Naive thymus-derived CD4-positive, alpha-beta T cell (primary cell): ENCODE measurements at regions of chr11 and their contacts with region 1.

Region 1: GRCh38 chr11:57800444-57801182 is 39.0 kb downstream of the CTNND1 start:
- DNase-seq: peak in 7 of 9 donors; percentile 46 to 70 (median 64)
- ATAC-seq: peak; percentile 93
- H3K4me3 ChIP-seq: no peak overlapping the region
- H3K4me3 Mint-ChIP-seq: peak overlapping the region in 6 of 10 donors; percentile 33 to 57 (median 54)
- H3K27ac ChIP-seq: peak overlapping the region; percentile 39
- H3K27ac Mint-ChIP-seq: peak overlapping the region; percentile 42 to 92 (median 80)
- H3K4me1 ChIP-seq: peaks cover 8 to 10% of the 10 kb centered on the region in 2 donors
- H3K4me1 Mint-ChIP-seq: peaks cover 22 to 40% (median 30%) of the 10 kb centered on the region in 7 donors
- H3K27me3 ChIP-seq: no peaks in the 10 kb centered on the region
- H3K27me3 Mint-ChIP-seq: no peaks in the 10 kb centered on the region

Region 2: GRCh38 chr11:57345555-57346211 is 454.9 kb before region 1 on chr11:
- CTCF ChIA-PET with region 1: interaction called, 4 read pairs
- POLR2A ChIA-PET with region 1: no interaction called
- intact Hi-C with region 1: loop called in 1 of 2 experiments (anchors 1 kb)
- DNase-seq: peak; percentile 39 to 68 (median 62)
- ATAC-seq: peak; percentile 87
- H3K4me3 ChIP-seq: no peak overlapping the region
- H3K4me3 Mint-ChIP-seq: no peak overlapping the region
- H3K27ac ChIP-seq: no peak overlapping the region
- H3K27ac Mint-ChIP-seq: no peak overlapping the region
- H3K4me1 ChIP-seq: no peaks in the 10 kb centered on the region
- H3K4me1 Mint-ChIP-seq: peaks cover 0 to 10% (median 0%) of the 10 kb centered on the region in 7 donors
- H3K27me3 ChIP-seq: no peaks in the 10 kb centered on the region
- H3K27me3 Mint-ChIP-seq: no peaks in the 10 kb centered on the region

Region 3: DNA sequence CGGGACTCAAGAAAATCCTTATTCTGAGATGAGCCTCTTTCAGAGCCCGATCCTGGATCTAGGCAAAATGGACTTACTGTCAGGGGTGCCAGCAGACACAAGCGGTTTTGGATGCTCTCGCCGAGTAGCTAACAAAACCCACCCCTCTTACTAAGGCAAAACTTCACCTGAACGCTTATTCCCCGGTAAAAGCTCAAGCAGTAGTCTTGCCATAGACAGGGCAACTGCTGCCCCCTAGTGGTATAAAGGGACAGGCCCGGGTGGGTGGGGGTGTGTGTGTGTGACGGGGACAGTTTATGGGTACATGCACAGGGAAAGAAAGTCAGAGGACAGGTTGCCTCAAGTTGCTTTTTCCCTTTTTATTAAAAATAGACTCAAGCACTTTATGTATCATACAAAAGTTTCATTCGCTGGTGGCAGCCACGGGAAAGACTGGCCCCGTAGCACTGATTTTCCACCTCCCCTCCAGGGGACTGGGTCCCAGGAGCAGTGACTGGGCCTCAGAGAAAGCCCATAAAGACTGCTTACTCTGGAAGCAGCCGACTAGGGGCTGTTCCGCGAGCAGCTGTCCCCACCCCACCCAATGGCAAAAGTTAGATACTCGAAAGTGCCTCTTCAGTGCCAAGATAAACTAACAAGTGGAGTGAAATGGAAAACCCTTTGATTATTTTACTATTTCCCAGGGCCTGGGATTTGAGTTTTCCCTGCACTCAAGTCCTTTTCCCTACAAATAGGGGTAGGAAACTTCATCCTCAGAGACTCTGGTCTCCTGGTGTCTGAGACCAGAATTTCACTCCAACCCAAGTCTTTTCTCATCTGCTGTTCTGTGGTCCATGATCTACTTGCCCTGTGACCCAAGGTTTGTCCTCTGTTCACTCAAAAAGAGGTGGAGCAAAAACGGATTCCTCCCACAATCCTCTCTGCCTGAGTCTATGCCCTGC is 155.6 kb before region 1 on chr11:
- CTCF ChIA-PET with region 1: interaction called, 9 read pairs
- POLR2A ChIA-PET with region 1: interaction called, 3 read pairs
- intact Hi-C with region 1: loop called in 1 of 2 experiments (anchors 1 kb)
- DNase-seq: peak; percentile 61 to 91 (median 85)
- ATAC-seq: peak; percentile 87
- H3K4me3 ChIP-seq: no peak overlapping the region
- H3K4me3 Mint-ChIP-seq: no peak overlapping the region
- H3K27ac ChIP-seq: no peak overlapping the region
- H3K27ac Mint-ChIP-seq: peak overlapping the region in 2 of 9 donors; percentile 36 to 56
- H3K4me1 ChIP-seq: peaks cover 11 to 14% of the 10 kb centered on the region in 2 donors
- H3K4me1 Mint-ChIP-seq: peaks cover 25 to 60% (median 41%) of the 10 kb centered on the region in 7 donors
- H3K27me3 ChIP-seq: peaks cover 10 to 18% of the 10 kb centered on the region in 2 donors
- H3K27me3 Mint-ChIP-seq: peaks cover 30 to 60% (median 47%) of the 10 kb centered on the region in 5 donors

Region 4: DNA sequence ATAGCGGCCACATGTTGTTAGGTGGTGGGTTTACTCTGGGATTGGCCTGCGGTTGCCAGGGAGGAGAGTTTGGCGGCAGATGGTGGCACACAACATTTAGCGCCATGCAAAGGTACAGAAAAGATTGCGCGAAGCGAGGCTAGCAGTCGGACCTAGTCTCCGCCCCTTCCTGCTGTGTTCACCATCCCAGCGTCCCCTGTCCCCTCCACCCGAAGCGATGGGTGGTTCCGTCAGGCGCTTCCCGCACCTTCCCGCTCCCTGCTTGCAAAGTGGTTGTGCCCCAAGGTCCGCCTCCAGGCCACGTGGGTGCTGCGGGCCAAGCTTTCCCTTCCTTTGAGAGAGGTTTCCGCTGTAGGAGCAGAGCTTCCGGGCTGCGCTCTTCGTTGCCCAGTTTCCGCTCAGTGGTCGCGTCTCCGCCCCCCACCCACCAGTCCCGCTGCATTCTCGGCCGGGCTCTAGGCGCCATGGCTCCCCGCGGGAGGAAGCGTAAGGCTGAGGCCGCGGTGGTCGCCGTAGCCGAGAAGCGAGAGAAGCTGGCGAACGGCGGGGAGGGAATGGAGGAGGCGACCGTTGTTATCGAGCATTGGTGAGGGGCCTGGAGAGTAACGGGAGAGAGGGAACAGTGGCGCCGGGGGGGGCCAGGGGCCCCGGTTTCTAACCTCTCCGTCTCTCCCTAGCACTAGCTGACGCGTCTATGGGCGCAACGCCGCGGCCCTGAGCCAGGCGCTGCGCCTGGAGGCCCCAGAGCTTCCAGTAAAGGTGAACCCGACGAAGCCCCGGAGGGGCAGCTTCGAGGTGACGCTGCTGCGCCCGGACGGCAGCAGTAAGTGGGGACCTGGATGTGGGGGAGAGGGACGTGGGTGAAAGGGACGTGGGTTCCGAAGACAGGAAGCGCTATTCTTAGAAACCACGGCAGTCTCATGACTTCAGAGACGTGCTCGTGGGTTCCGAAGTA is 59.2 kb before region 1 on chr11 and contains the start of gene SELENOH:
- CTCF ChIA-PET with region 1: interaction called, 16 read pairs
- POLR2A ChIA-PET with region 1: interaction called, 26 read pairs
- intact Hi-C with region 1: loop called (anchors 1 kb)
- DNase-seq: peak; percentile 75 to 96 (median 91)
- ATAC-seq: peak; percentile 94
- H3K4me3 ChIP-seq: peak within 1 kb of the TSS; percentile 86
- H3K4me3 Mint-ChIP-seq: peak within 1 kb of the TSS; percentile 90 to 100 (median 99)
- H3K27ac ChIP-seq: peak within 1 kb of the TSS; percentile 93
- H3K27ac Mint-ChIP-seq: peak within 1 kb of the TSS; percentile 97 to 100 (median 98)
- H3K4me1 ChIP-seq: peaks cover 16 to 23% of the 10 kb centered on the region in 2 donors
- H3K4me1 Mint-ChIP-seq: peaks cover 12 to 50% (median 41%) of the 10 kb centered on the region in 7 donors
- H3K27me3 ChIP-seq: no peaks in the 10 kb centered on the region
- H3K27me3 Mint-ChIP-seq: no peaks in the 10 kb centered on the region
- total RNA-seq, gene SELENOH: 93.6 to 193 (median 124) TPM

Region 5: GRCh38 chr11:57761301-57762234 is 39.0 kb before region 1 on chr11 and contains the start of gene CTNND1:
- CTCF ChIA-PET with region 1: interaction called, 14 read pairs
- POLR2A ChIA-PET with region 1: interaction called, 3 read pairs
- intact Hi-C with region 1: loop called (anchors 1 kb)
- DNase-seq: no peak
- ATAC-seq: peak; percentile 78
- H3K4me3 ChIP-seq: no peak within 1 kb of the TSS
- H3K4me3 Mint-ChIP-seq: peak within 1 kb of the TSS; percentile 7 to 65 (median 32)
- H3K27ac ChIP-seq: no peak within 1 kb of the TSS
- H3K27ac Mint-ChIP-seq: peak within 1 kb of the TSS in 5 of 9 donors; percentile 20 to 52 (median 45)
- H3K4me1 ChIP-seq: peaks cover 0 to 11% of the 10 kb centered on the region in 2 donors
- H3K4me1 Mint-ChIP-seq: peaks cover 17 to 39% (median 28%) of the 10 kb centered on the region in 7 donors
- H3K27me3 ChIP-seq: no peaks in the 10 kb centered on the region
- H3K27me3 Mint-ChIP-seq: peaks cover 0 to 5% (median 0%) of the 10 kb centered on the region in 5 donors
- total RNA-seq, gene CTNND1: 9.3 to 32.0 (median 13.7) TPM

Region 6: GRCh38 chr11:58726737-58727414 is 926.3 kb after region 1 on chr11:
- CTCF ChIA-PET with region 1: no interaction called
- POLR2A ChIA-PET with region 1: no interaction called
- intact Hi-C with region 1: loop called in 1 of 2 experiments (anchors 5 kb)
- DNase-seq: peak in 7 of 9 donors; percentile 39 to 79 (median 73)
- ATAC-seq: peak; percentile 84
- H3K4me3 ChIP-seq: no peak overlapping the region
- H3K4me3 Mint-ChIP-seq: peak overlapping the region; percentile 33 to 86 (median 62)
- H3K27ac ChIP-seq: peak overlapping the region; percentile 60
- H3K27ac Mint-ChIP-seq: peak overlapping the region; percentile 58 to 99 (median 97)
- H3K4me1 ChIP-seq: peaks cover 4 to 41% of the 10 kb centered on the region in 2 donors
- H3K4me1 Mint-ChIP-seq: peaks cover 16 to 67% (median 54%) of the 10 kb centered on the region in 7 donors
- H3K27me3 ChIP-seq: no peaks in the 10 kb centered on the region
- H3K27me3 Mint-ChIP-seq: no peaks in the 10 kb centered on the region